Activated B cell treated with CpG ODN at 0.5 μM for 24 hours (primary cell): ENCODE measurements at regions of chr10 and their contacts with region 1.

Region 1: GRCh38 chr10:7471720-7472367 is 61.0 kb upstream of the SFMBT2 start:
- DNase-seq: peak; percentile 59
- ATAC-seq: peak; percentile 89
- H3K4me3 Mint-ChIP-seq: peak overlapping the region; percentile 73
- H3K27ac Mint-ChIP-seq: peak overlapping the region; percentile 90
- H3K4me1 Mint-ChIP-seq: peaks cover 78% of the 10 kb centered on the region
- H3K27me3 Mint-ChIP-seq: no peaks in the 10 kb centered on the region
- CTCF ChIP-seq: no peak

Region 2: DNA sequence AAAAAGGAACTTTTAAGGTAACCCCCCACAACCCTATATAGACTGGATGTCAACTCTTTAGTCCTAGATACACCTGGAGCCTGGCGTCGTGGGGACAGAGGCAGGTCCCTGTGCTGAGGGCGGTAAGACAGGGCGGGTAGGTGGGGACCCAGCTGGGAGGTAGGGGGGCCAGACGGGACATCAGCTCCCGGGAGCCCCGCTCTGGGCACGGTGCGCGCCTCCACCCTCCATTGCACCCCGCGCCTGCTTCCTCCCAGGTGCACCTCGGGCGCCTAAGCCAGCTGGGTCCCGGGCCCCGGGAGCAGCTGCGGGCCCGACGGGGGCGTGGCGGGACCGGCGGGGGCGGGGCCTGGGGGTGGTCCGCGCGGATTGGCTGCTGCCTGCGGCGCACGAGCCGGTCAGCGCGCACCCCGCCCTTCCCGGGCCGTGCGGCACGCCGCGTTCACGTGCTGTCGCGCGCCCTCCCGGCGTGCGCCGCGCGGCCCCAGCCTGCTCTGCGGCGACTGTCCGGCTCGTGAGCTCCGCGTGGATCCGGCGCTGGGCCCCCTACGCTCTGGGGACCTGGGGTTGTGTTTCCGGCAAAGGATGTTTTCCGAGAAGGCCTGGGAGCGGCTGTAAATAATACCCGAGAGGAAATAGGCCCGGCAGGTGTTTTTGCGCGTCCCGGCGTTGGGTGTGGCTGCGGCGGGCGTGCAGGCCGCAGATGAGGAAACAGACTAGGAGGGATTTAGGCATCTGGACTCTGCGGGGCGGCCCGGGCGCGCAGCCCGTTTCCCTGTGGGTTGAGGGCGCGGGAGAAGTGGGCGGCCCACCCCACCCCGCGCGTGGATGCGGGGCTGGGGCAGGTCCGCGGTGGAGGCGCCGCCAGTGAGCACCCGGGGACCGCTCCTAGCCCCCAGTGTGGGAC is 1308.2 kb before region 1 on chr10:
- CTCF ChIA-PET with region 1: no interaction called
- POLR2A ChIA-PET with region 1: no interaction called
- intact Hi-C with region 1: loop called (anchors 5 kb)
- DNase-seq: peak; percentile 90
- ATAC-seq: peak; percentile 98
- H3K4me3 Mint-ChIP-seq: peak overlapping the region; percentile 96
- H3K27ac Mint-ChIP-seq: peak overlapping the region; percentile 97
- H3K4me1 Mint-ChIP-seq: peaks cover 34% of the 10 kb centered on the region
- H3K27me3 Mint-ChIP-seq: no peaks in the 10 kb centered on the region
- CTCF ChIP-seq: no peak

Region 3: DNA sequence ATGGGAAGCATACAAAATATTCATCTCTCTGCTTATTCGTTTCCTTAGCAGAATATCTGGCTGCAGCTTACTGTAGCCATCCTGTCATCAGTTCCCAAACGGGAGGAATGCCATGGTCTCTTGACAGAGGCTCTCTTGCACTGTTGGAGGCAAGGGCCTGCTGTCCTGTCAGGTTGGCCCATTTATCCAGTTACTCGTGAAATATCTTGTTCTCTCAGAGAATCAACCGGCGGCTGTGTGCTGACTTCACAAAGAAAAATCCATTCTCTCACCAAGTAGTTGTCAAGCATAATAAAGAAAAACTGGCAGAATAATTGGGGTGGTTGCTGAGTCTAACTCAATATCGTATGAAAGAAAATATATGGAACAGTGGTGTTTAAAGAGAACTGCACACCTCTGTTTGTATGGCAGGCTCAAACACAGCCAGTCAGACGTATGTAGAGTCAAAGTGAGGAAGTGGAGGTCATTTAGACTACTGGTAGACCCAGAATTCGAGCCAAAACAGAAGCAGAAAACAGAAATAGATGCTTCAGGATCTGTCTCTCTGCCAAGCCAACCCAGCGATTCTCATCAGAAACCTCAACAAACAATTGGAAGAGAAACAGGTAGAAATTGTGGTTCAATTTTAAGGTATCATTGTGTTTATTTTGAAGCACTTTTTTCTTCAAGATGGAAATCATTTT is 542.6 kb before region 1 on chr10:
- CTCF ChIA-PET with region 1: no interaction called
- POLR2A ChIA-PET with region 1: interaction called, 4 read pairs
- intact Hi-C with region 1: loop called (anchors 1 kb)
- DNase-seq: no peak
- ATAC-seq: no peak
- H3K4me3 Mint-ChIP-seq: no peak overlapping the region
- H3K27ac Mint-ChIP-seq: no peak overlapping the region
- H3K4me1 Mint-ChIP-seq: peaks cover 47% of the 10 kb centered on the region
- H3K27me3 Mint-ChIP-seq: no peaks in the 10 kb centered on the region
- CTCF ChIP-seq: no peak

Region 4: GRCh38 chr10:7184660-7185366 is 287.0 kb before region 1 on chr10:
- CTCF ChIA-PET with region 1: no interaction called
- POLR2A ChIA-PET with region 1: no interaction called
- intact Hi-C with region 1: loop called (anchors 10 kb)
- DNase-seq: no peak
- ATAC-seq: peak; percentile 75
- H3K4me3 Mint-ChIP-seq: peak overlapping the region; percentile 25
- H3K27ac Mint-ChIP-seq: peak overlapping the region; percentile 62
- H3K4me1 Mint-ChIP-seq: peaks cover 27% of the 10 kb centered on the region
- H3K27me3 Mint-ChIP-seq: no peaks in the 10 kb centered on the region
- CTCF ChIP-seq: no peak

Region 5: GRCh38 chr10:7445474-7446185 is 26.2 kb before region 1 on chr10:
- CTCF ChIA-PET with region 1: no interaction called
- POLR2A ChIA-PET with region 1: interaction called, 5 read pairs
- intact Hi-C with region 1: loop called (anchors 2 kb)
- DNase-seq: no peak
- ATAC-seq: peak; percentile 68
- H3K4me3 Mint-ChIP-seq: peak overlapping the region; percentile 45
- H3K27ac Mint-ChIP-seq: peak overlapping the region; percentile 64
- H3K4me1 Mint-ChIP-seq: peaks cover 24% of the 10 kb centered on the region
- H3K27me3 Mint-ChIP-seq: no peaks in the 10 kb centered on the region
- CTCF ChIP-seq: no peak

Region 6: GRCh38 chr10:7484456-7485243 is 12.8 kb after region 1 on chr10:
- CTCF ChIA-PET with region 1: interaction called, 4 read pairs
- POLR2A ChIA-PET with region 1: interaction called, 8 read pairs
- intact Hi-C with region 1: loop called (anchors 1 kb)
- DNase-seq: no peak
- ATAC-seq: peak; percentile 32
- H3K4me3 Mint-ChIP-seq: peak overlapping the region; percentile 76
- H3K27ac Mint-ChIP-seq: peak overlapping the region; percentile 53
- H3K4me1 Mint-ChIP-seq: peaks cover 64% of the 10 kb centered on the region
- H3K27me3 Mint-ChIP-seq: no peaks in the 10 kb centered on the region
- CTCF ChIP-seq: no peak